ENCODE measurements at regions of chr16 and their contacts with region 1.

Region 1: GRCh38 chr16:76176153-76176552 is 101.0 kb upstream of the CNTNAP4 start:
- DNase-seq: no peak
- ATAC-seq: no peak
- H3K4me3 ChIP-seq: no peak overlapping the region
- H3K27ac ChIP-seq: no peak overlapping the region
- H3K4me1 ChIP-seq: no peaks in the 10 kb centered on the region
- H3K27me3 ChIP-seq: no peaks in the 10 kb centered on the region
- CTCF ChIP-seq: no peak
- EP300 ChIP-seq: no peak
- POLR2A ChIP-seq: no peak
- RAD21 ChIP-seq: no peak

Region 2: DNA sequence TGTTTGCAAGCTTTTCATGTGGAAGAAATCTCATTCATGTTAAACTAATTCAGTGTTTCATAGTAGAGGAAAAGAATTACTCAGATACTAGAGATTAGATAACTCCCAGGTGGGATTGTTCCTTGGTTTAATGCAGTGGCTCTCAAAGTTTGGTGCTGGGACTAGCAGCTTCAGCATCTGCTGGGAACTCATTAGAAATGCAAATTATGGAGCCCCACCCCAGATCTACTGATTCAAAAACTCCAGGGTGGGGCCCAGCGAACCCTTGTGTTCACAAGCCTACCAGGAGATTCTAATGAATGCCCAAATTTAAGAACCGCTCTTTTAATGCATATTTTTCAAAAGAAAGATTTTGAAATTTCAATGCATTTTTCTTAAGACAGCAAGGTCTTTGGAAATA is 152.3 kb before region 1 on chr16:
- CTCF ChIA-PET with region 1: no interaction called
- POLR2A ChIA-PET with region 1: no interaction called
- in situ Hi-C with region 1: no loop called
- intact Hi-C with region 1: no loop called
- DNase-seq: no peak
- ATAC-seq: no peak
- H3K4me3 ChIP-seq: no peak overlapping the region
- H3K27ac ChIP-seq: no peak overlapping the region
- H3K4me1 ChIP-seq: no peaks in the 10 kb centered on the region
- H3K27me3 ChIP-seq: no peaks in the 10 kb centered on the region
- CTCF ChIP-seq: no peak
- EP300 ChIP-seq: no peak
- POLR2A ChIP-seq: no peak
- RAD21 ChIP-seq: no peak

Region 3: DNA sequence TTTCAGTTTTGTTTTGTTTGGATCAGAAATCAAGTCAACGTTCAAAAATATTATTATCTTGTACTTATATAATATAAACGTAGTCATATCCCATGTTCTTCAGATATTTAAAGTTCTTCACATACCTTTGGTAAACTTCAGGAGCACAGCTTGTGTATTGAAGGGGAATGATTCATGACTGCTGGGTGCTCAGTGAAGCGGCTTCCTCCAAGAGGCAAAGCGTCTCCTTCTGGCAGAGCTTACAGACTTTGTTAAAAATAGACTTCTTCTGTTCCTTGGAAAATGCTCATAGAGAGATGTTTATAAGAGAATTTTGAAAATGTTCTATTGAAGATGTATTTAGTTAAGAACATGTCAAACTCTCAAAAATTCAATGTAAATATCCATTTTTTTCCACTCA is 54.5 kb before region 1 on chr16:
- CTCF ChIA-PET with region 1: no interaction called
- POLR2A ChIA-PET with region 1: no interaction called
- in situ Hi-C with region 1: no loop called
- intact Hi-C with region 1: no loop called
- DNase-seq: no peak
- ATAC-seq: no peak
- H3K4me3 ChIP-seq: no peak overlapping the region
- H3K27ac ChIP-seq: no peak overlapping the region
- H3K4me1 ChIP-seq: no peaks in the 10 kb centered on the region
- H3K27me3 ChIP-seq: no peaks in the 10 kb centered on the region
- CTCF ChIP-seq: no peak
- EP300 ChIP-seq: no peak
- POLR2A ChIP-seq: no peak
- RAD21 ChIP-seq: no peak

Region 4: DNA sequence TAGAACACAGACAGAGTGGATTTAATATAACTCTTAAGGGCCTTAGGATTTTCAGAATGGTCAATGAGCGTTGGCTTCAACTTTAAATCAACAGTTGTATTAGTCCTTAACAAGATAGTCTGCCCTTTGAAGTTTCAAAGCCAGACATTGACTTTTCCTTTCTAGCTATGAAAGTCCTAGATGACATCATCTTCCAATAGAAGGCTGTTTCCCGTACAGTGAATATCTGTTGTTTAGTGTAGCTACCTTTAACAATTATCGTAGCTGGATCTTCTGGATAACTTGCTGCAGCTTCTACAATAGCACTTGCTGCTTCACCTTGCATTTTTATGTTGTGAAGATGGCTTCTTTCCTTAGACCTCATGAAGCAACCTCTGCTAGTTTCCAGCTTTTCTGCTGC is 24.3 kb before region 1 on chr16:
- CTCF ChIA-PET with region 1: no interaction called
- POLR2A ChIA-PET with region 1: no interaction called
- in situ Hi-C with region 1: no loop called
- intact Hi-C with region 1: loop called (anchors 1 kb)
- DNase-seq: no peak
- ATAC-seq: no peak
- H3K4me3 ChIP-seq: no peak overlapping the region
- H3K27ac ChIP-seq: no peak overlapping the region
- H3K4me1 ChIP-seq: no peaks in the 10 kb centered on the region
- H3K27me3 ChIP-seq: no peaks in the 10 kb centered on the region
- CTCF ChIP-seq: no peak
- EP300 ChIP-seq: no peak
- POLR2A ChIP-seq: no peak
- RAD21 ChIP-seq: no peak

Region 5: DNA sequence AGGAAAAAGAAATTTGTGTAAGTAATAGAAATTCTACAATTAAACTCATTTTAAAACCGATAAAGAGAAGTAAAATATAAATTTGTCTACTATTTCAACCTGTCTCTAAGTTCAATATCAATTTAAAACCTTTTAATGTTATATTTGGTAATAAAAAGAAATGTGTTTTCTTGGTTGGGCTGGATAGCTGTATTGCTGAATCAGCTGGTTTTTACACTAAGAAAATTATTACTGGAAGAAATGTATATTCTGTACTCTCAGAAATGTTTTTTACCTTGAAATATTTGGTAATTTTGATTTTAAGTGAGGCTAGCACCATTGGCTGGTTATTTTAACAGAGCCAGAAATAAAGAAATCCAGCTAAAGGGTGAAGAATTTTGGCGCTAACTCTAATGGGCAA is 13.9 kb after region 1 on chr16:
- CTCF ChIA-PET with region 1: no interaction called
- POLR2A ChIA-PET with region 1: no interaction called
- in situ Hi-C with region 1: no loop called
- intact Hi-C with region 1: no loop called
- DNase-seq: no peak
- ATAC-seq: no peak
- H3K4me3 ChIP-seq: no peak overlapping the region
- H3K27ac ChIP-seq: no peak overlapping the region
- H3K4me1 ChIP-seq: no peaks in the 10 kb centered on the region
- H3K27me3 ChIP-seq: no peaks in the 10 kb centered on the region
- CTCF ChIP-seq: no peak
- EP300 ChIP-seq: no peak
- POLR2A ChIP-seq: no peak
- RAD21 ChIP-seq: no peak